Lower leg skin (tissue), 4 donors: ENCODE measurements at regions of chr15 and their contacts with region 1.

Region 1: DNA sequence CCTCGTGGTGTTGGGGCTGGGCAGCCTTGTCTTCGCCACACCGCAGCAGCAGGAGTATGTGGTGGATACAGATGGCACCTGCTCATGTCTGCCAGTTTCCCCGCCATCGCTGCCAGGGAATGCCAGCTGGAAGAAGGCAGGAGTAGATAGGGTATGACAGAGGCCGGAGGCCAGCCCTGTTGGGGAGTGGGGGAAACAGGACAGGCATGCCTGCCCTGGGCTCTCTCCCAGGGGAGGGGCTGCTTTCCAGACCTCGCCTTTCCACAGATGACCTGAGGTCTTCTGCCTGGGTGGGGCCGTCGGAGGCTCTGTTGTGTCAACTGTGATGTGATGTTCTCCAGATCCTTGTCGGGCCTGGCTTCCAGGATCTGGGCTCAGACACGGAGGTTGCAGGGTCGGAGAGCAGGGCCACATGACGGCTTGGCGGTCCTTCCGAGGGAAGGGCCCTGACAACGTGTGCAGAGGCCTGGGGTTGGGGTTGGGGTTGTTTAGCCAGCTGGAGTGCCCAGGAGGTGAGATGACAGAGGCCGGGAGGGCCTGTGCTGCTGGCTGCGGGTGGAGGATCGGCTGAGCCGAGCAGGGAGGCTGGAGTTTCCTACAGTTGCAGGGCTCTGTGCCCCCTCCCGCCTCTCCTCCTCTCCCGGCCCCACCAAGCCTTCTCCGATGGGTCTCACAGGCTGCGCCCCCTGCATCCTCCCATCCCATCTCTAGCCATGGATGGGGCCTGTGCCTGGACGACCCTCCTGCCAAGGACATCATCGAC is 102.0 kb downstream of the TBC1D2B start:
- DNase-seq: peak in 1 of 2 donors; percentile 85
- H3K4me3 ChIP-seq: no peak overlapping the region
- CTCF ChIP-seq: no peak
- POLR2A ChIP-seq: no peak

Region 2: GRCh38 chr15:76994971-76995945 is 980.3 kb before region 1 on chr15 and contains the start of gene PSTPIP1:
- intact Hi-C with region 1: loop called (anchors 5 kb)
- DNase-seq: peak in 1 of 2 donors; percentile 88
- H3K4me3 ChIP-seq: no peak within 1 kb of the TSS
- CTCF ChIP-seq: no peak
- POLR2A ChIP-seq: no peak
- total RNA-seq, gene PSTPIP1: 2.9 to 8.9 (median 4.0) TPM